ENCODE measurements at regions of chr4 and their contacts with region 1.

Region 1: DNA sequence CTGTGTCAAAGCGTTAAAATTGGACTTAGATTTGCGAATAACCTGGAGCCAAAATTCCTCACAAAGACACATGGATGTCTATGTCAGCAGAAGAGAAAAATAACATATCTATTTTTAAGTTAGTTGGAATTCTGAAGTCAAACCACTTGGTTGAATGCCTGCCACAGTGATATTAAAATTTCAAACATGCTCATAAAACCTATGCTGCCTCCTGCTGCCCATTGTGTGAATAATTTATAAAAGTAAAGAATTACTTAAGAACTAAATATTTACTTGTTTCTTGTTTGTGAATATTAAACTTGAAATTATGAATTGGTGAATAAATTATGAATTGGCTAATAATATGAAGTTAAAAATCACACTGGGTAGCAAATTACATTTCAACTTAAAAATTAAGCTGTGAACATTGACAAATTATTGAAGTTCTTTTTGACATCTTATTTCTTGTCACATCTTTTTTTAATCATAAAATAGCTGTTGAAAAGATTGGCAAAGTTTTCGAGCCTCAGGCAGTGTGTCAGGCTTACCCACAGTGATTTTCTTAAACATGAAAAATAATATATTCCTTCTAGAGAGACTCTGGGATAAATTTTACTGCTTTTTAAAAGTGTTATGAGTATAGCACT is 35.4 kb downstream of the FABP2 start:
- DNase-seq: peak; percentile 78
- H3K4me3 Mint-ChIP-seq: no peak overlapping the region
- H3K27ac Mint-ChIP-seq: no peak overlapping the region
- H3K4me1 Mint-ChIP-seq: peaks cover 14% of the 10 kb centered on the region
- H3K27me3 Mint-ChIP-seq: no peaks in the 10 kb centered on the region

Region 2: GRCh38 chr4:118981839-118982381 is 304.6 kb before region 1 on chr4:
- intact Hi-C with region 1: loop called (anchors 1 kb)
- DNase-seq: peak; percentile 84
- H3K4me3 Mint-ChIP-seq: no peak overlapping the region
- H3K27ac Mint-ChIP-seq: no peak overlapping the region
- H3K4me1 Mint-ChIP-seq: no peaks in the 10 kb centered on the region
- H3K27me3 Mint-ChIP-seq: peaks cover 14% of the 10 kb centered on the region

Region 3: DNA sequence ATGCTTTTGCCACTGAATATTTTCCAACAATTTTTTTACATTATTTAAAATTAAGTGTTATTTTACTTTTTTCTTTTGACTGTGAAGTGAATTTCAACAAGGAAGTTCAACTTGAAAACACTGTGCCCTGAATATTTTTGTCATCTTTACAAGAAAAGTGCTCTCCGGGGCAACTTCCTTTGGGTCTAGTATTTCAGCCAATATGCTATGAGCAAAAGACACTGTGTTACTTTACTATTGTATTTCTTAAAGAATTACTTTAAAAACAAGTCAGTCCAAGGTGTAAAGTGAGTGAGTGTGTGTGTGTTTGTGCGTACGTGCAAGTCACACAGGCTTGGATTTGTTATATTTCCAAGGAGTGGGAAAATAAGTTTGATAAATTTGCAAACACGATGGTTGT is 81.6 kb before region 1 on chr4:
- intact Hi-C with region 1: no loop called
- DNase-seq: no peak
- H3K4me3 Mint-ChIP-seq: no peak overlapping the region
- H3K27ac Mint-ChIP-seq: no peak overlapping the region
- H3K4me1 Mint-ChIP-seq: peaks cover 15% of the 10 kb centered on the region
- H3K27me3 Mint-ChIP-seq: peaks cover 3% of the 10 kb centered on the region

Measured in activated CD4-positive, alpha-beta T cell treated with anti-CD3 and anti-CD28 coated beads, Interleukin-2, amount 10 ng/mL, durations not matched to agents 24 days and 14 days (primary cell).